ENCODE measurements at regions of chr7 and their contacts with region 1.

Region 1: DNA sequence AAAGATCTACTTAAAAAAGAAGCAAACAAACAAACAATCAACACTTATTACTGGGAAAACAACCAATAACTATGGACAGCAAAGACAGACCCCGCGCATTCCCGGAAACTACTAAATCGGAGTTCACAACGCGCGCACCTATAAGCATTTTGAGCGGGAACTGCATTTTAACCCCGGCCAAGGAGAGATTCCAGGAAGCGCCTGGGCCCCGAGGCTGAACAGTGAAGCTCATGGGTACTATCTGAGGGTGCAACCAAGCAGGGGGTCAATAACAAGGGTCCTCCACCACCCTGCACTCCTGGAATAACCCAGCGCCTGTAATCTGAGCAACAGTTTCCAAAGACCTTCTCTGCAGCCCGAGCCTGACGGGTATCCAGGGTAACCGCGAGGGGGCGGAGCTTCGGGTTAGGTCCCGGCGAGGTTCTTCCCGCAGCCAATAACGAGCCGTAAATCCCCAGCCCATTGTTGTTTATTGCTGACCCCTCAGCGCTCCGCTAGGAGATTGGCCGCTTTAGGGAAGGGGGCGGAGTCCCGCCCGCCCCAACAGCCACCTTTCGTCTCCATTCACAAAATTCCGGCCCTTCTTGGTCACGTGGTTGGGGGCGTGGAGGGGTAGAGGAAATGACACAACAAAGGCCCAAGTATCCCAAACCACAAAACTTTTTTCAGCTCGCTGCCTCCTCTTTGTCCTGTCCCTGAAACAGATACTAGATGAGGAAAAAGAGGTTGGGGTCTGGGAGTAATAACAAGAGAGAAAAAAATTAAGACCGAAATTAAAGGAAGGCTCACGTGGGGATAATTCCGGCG is 1.7 kb upstream of the ETV1 start:
- DNase-seq: peak; percentile 97
- ATAC-seq: peak; percentile 96
- H3K4me3 ChIP-seq: peak overlapping the region; percentile 54 to 78
- H3K27ac ChIP-seq: peak overlapping the region; percentile 87 to 92
- H3K4me1 ChIP-seq: no peaks in the 10 kb centered on the region
- H3K27me3 ChIP-seq: no peaks in the 10 kb centered on the region

Region 2: GRCh38 chr7:13920053-13920697 is 71.0 kb before region 1 on chr7:
- intact Hi-C with region 1: loop called in 1 of 2 experiments (anchors 5 kb)
- DNase-seq: no peak
- ATAC-seq: peak; percentile 65
- H3K4me3 ChIP-seq: no peak overlapping the region
- H3K27ac ChIP-seq: no peak overlapping the region
- H3K4me1 ChIP-seq: peaks cover 0 to 2% of the 10 kb centered on the region in 2 donors
- H3K27me3 ChIP-seq: no peaks in the 10 kb centered on the region

Region 3: GRCh38 chr7:14009453-14010418 is 18.5 kb after region 1 on chr7:
- intact Hi-C with region 1: no loop called
- DNase-seq: no peak
- ATAC-seq: no peak
- H3K4me3 ChIP-seq: no peak overlapping the region
- H3K27ac ChIP-seq: no peak overlapping the region
- H3K4me1 ChIP-seq: no peaks in the 10 kb centered on the region
- H3K27me3 ChIP-seq: no peaks in the 10 kb centered on the region